Psoas muscle (tissue), 8 donors: ENCODE measurements at regions of chr5 and their contacts with region 1.

Region 1: DNA sequence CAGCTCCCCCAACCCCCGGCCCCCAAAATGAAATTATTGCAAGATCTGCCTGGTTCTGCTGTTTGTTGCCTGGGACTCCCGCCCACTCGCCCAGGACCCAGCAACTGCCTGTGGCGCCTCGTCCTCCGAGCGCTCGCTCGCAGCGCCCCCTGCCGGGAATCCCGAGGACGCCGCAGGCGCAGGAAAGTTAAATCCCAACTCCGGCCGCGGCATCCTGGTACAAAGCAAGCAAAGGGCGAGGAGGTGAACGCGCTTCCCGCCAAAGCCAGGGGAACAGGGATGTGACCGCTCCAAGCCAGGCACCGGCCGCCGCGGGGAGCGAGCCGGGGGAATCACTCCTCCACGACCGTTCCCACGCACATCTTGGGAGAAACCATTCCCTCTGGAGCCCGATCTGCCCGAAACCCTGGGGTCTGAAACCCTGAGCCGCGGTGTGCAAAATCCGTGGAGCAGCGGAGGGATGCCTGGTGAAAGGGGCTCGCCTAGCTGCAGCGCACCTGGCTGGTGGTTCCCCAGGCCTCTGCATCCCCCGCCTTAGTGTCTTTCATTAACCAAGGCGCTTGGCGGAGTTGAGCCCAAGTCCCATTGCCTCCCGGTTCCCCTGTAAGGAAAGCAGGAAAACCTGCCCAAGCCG is 1.3 kb downstream of the SEMA5A start:
- DNase-seq: peak; percentile 81 to 87
- ATAC-seq: peak; percentile 78 to 90 (median 82)
- H3K4me3 ChIP-seq: peak overlapping the region; percentile 77
- H3K27ac ChIP-seq: no peak overlapping the region
- H3K4me1 ChIP-seq: peaks cover 9% of the 10 kb centered on the region
- H3K27me3 ChIP-seq: no peaks in the 10 kb centered on the region
- CTCF ChIP-seq: peak; percentile 77

Region 2: GRCh38 chr5:9361835-9362234 is 182.8 kb before region 1 on chr5:
- intact Hi-C with region 1: loop called (anchors 2 to 5 kb)
- DNase-seq: peak in 1 of 2 donors; percentile 18
- ATAC-seq: peak in 2 of 4 donors; percentile 61
- H3K4me3 ChIP-seq: no peak overlapping the region
- H3K27ac ChIP-seq: no peak overlapping the region
- H3K4me1 ChIP-seq: no peaks in the 10 kb centered on the region
- H3K27me3 ChIP-seq: no peaks in the 10 kb centered on the region
- CTCF ChIP-seq: peak; percentile 59